ENCODE measurements at regions of chr11 and their contacts with region 1.

Region 1: GRCh38 chr11:62556108-62556871 is 9.7 kb upstream of the AHNAK start:
- H3K4me3 Mint-ChIP-seq: peak overlapping the region; percentile 79
- H3K27ac Mint-ChIP-seq: peak overlapping the region; percentile 99
- H3K4me1 Mint-ChIP-seq: peaks cover 89% of the 10 kb centered on the region
- H3K27me3 Mint-ChIP-seq: no peaks in the 10 kb centered on the region

Region 2: DNA sequence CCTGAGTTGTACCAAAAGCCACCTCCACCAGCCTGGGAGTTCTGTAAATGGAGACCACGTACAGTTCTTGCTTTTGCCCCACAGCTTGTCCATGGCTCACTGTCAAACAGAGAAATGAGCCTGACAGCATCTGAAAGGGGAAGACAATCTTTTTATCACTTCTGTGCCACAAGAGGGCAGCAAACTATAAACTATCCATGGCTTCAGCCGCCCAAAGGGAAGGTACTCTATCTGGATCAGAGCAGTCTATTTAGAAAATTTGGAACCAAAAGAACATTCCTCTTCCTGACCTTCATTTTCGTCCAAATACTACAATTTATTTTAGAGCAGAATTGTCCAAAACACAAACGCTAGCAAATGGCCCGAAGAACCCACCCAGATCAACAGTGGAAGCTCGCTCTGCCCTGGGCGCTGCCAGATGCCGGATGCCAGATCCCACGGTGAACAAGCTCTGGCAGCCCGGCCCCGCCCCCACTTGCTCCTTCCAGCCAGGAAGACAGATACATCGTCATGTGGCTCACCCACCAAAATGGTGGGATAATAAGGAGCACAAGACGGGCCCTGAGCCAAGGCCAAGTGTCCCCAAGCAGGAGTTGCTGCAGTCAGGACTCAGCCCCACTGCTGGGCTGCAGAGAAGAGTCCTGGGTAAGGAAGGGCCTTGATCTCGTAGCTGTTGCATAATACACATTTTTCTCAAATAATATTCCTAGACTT is 161.3 kb before region 1 on chr11:
- intact Hi-C with region 1: loop called (anchors 5 kb)
- H3K4me3 Mint-ChIP-seq: no peak overlapping the region
- H3K27ac Mint-ChIP-seq: no peak overlapping the region
- H3K4me1 Mint-ChIP-seq: peaks cover 50% of the 10 kb centered on the region
- H3K27me3 Mint-ChIP-seq: no peaks in the 10 kb centered on the region

Region 3: DNA sequence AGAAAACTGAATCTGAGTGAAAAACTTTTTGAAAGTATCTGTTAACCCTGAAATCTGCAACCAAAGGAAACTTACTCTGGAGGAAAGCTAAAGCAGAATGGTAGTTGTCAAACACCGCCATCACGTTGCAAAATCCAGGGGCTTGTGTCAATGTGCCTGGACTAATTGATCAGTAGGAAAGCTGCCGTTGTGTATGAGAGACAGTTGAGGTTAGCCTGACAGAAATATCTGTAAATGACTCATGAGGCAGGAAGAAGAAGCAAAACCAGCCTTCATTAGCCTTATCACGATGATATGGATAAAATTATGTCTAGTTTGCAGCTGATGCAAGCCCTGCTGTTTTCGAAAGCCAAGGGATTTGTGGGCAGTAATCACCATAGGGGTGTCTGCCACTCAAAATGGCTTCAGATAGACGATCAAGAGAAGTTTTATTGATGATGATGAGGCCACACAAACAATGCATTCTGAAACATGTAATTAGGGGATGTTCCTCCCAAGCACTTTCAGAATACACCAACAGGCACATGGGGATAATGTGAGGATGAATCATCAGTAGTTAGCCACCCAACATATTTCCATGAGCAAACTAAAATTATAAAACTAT is 128.6 kb before region 1 on chr11:
- intact Hi-C with region 1: loop called (anchors 1 kb)
- H3K4me3 Mint-ChIP-seq: peak overlapping the region; percentile 9
- H3K27ac Mint-ChIP-seq: peak overlapping the region; percentile 83
- H3K4me1 Mint-ChIP-seq: peaks cover 78% of the 10 kb centered on the region
- H3K27me3 Mint-ChIP-seq: peaks cover 5% of the 10 kb centered on the region

Region 4: GRCh38 chr11:62542750-62543567 is 13.3 kb before region 1 on chr11:
- intact Hi-C with region 1: loop called (anchors 1 kb)
- H3K4me3 Mint-ChIP-seq: peak overlapping the region; percentile 97
- H3K27ac Mint-ChIP-seq: peak overlapping the region; percentile 95
- H3K4me1 Mint-ChIP-seq: peaks cover 70% of the 10 kb centered on the region
- H3K27me3 Mint-ChIP-seq: peaks cover 3% of the 10 kb centered on the region

Region 5: GRCh38 chr11:62573592-62574362 is 17.5 kb after region 1 on chr11 and contains the start of gene EEF1G:
- intact Hi-C with region 1: loop called (anchors 2 kb)
- H3K4me3 Mint-ChIP-seq: peak within 1 kb of the TSS; percentile 98
- H3K27ac Mint-ChIP-seq: peak within 1 kb of the TSS; percentile 96
- H3K4me1 Mint-ChIP-seq: peaks cover 49% of the 10 kb centered on the region
- H3K27me3 Mint-ChIP-seq: no peaks in the 10 kb centered on the region